ENCODE measurements at regions of chr14 and their contacts with region 1.

Region 1: GRCh38 chr14:67166450-67166853 is 22.8 kb upstream of the GARIN2 start:
- DNase-seq: no peak
- ATAC-seq: peak; percentile 46; the same call in 1 of the 3 replicates
- H3K4me3 ChIP-seq: no peak overlapping the region
- H3K27ac ChIP-seq: no peak overlapping the region
- H3K4me1 ChIP-seq: peaks cover 6% of the 10 kb centered on the region
- H3K27me3 ChIP-seq: no peaks in the 10 kb centered on the region
- CTCF ChIP-seq: peak; percentile 72
- EP300 ChIP-seq: no peak
- POLR2A ChIP-seq: no peak
- RAD21 ChIP-seq: peak; percentile 57; the same call in 1 of the 2 replicates

Region 2: GRCh38 chr14:67151131-67151569 is 15.3 kb before region 1 on chr14:
- CTCF ChIA-PET with region 1: no interaction called
- POLR2A ChIA-PET with region 1: no interaction called
- in situ Hi-C with region 1: no loop called
- intact Hi-C with region 1: no loop called
- DNase-seq: no peak
- ATAC-seq: no peak
- H3K4me3 ChIP-seq: no peak overlapping the region
- H3K27ac ChIP-seq: no peak overlapping the region
- H3K4me1 ChIP-seq: peaks cover 6% of the 10 kb centered on the region; the same call in 1 of the 2 replicates
- H3K27me3 ChIP-seq: no peaks in the 10 kb centered on the region
- CTCF ChIP-seq: no peak
- EP300 ChIP-seq: no peak
- POLR2A ChIP-seq: no peak
- RAD21 ChIP-seq: no peak

Region 3: GRCh38 chr14:67280506-67280905 is 114.1 kb after region 1 on chr14:
- CTCF ChIA-PET with region 1: interaction called, 42 read pairs
- POLR2A ChIA-PET with region 1: no interaction called
- in situ Hi-C with region 1: loop called (anchors 5 kb)
- intact Hi-C with region 1: no loop called
- DNase-seq: no peak
- ATAC-seq: no peak
- H3K4me3 ChIP-seq: no peak overlapping the region
- H3K27ac ChIP-seq: no peak overlapping the region
- H3K4me1 ChIP-seq: no peaks in the 10 kb centered on the region
- H3K27me3 ChIP-seq: no peaks in the 10 kb centered on the region
- CTCF ChIP-seq: no peak
- EP300 ChIP-seq: no peak
- POLR2A ChIP-seq: no peak
- RAD21 ChIP-seq: no peak

Region 4: GRCh38 chr14:67285876-67286452 is 119.5 kb after region 1 on chr14:
- CTCF ChIA-PET with region 1: interaction called, 42 read pairs
- POLR2A ChIA-PET with region 1: no interaction called
- in situ Hi-C with region 1: loop called (anchors 5 kb)
- intact Hi-C with region 1: loop called (anchors 1 kb)
- DNase-seq: peak; percentile 25
- ATAC-seq: no peak
- H3K4me3 ChIP-seq: no peak overlapping the region
- H3K27ac ChIP-seq: no peak overlapping the region
- H3K4me1 ChIP-seq: no peaks in the 10 kb centered on the region
- H3K27me3 ChIP-seq: no peaks in the 10 kb centered on the region
- CTCF ChIP-seq: 0 out of 2 replicates have a peak, but pooled peaks have one; percentile 33
- EP300 ChIP-seq: no peak
- POLR2A ChIP-seq: no peak
- RAD21 ChIP-seq: no peak

Region 5: DNA sequence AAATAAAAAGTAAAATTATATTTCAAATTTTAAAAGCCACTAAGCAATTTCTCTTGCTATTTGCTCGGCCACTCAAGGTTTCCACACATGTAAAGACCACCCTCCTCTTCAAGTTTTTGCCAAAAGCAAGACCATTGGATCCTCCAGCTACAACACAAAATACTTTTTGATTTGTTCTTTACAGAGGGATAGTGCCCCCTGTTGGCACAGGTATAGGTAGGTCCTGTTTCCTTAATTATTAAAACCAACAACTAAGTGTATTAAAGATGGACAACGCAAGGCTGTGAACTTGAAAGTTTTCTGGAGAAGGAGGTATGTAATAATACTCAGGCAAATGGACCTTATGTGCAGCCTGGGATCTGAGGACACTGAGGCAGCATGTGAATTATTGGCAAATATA is 169.3 kb after region 1 on chr14:
- CTCF ChIA-PET with region 1: interaction called, 17 read pairs
- POLR2A ChIA-PET with region 1: no interaction called
- in situ Hi-C with region 1: no loop called
- intact Hi-C with region 1: loop called (anchors 1 kb)
- DNase-seq: peak; percentile 56
- ATAC-seq: no peak; the same call in 2 of the 3 replicates
- H3K4me3 ChIP-seq: no peak overlapping the region
- H3K27ac ChIP-seq: no peak overlapping the region
- H3K4me1 ChIP-seq: no peaks in the 10 kb centered on the region
- H3K27me3 ChIP-seq: no peaks in the 10 kb centered on the region
- CTCF ChIP-seq: peak; percentile 49
- EP300 ChIP-seq: no peak
- POLR2A ChIP-seq: no peak
- RAD21 ChIP-seq: no peak